ENCODE measurements at regions of chr12 and their contacts with region 1.

Region 1: DNA sequence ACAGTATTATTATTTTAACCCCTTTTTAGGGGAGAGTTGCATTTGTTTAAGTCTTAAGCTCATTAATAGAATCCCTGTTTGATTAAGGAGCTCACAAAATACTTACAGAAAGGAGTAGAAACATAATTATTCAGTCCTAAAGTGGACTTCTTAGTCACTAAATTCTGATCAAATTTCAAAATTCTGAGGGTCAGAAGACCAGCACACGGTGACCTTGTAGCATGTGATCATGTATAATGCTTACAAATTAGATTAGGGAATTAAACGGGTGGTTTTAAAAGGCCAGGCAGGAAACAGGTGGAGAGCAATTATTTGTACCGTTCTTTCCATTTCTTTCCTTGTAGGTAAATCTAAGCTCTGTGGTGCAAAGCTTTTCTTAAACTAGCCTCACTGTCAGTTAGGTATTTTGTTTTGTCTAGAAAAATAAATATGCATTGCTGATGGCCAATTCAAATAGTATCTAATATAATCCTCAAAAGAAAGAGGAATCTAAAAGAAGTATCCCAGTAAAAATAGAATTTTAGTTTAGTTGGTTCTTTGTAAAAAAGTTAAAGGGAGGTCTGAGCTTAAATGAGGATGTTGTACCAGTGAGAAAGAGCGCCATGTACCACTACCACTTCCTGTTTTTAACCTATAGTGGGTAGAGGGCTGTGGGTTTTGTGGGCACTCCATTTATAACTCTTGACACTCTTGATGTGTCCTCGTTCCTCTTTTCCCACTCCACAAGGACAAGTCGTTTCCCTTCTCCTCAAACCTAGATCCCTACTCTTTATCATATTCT is 51.1 kb downstream of the SLC38A1 start:
- DNase-seq: peak in 8 of 9 donors; percentile 58 to 87 (median 84)
- ATAC-seq: peak; percentile 54
- H3K4me3 ChIP-seq: peak overlapping the region; percentile 41
- H3K4me3 Mint-ChIP-seq: peak overlapping the region; percentile 74 to 89 (median 81)
- H3K27ac ChIP-seq: peak overlapping the region; percentile 78
- H3K27ac Mint-ChIP-seq: peak overlapping the region; percentile 89 to 100 (median 99)
- H3K4me1 ChIP-seq: peaks cover 95% of the 10 kb centered on the region in 2 donors
- H3K4me1 Mint-ChIP-seq: peaks cover 69 to 100% (median 98%) of the 10 kb centered on the region in 7 donors
- H3K27me3 ChIP-seq: no peaks in the 10 kb centered on the region
- H3K27me3 Mint-ChIP-seq: no peaks in the 10 kb centered on the region

Region 2: GRCh38 chr12:46179683-46180452 is 37.9 kb before region 1 on chr12:
- CTCF ChIA-PET with region 1: no interaction called
- POLR2A ChIA-PET with region 1: interaction called, 3 read pairs
- intact Hi-C with region 1: loop called in 1 of 2 experiments (anchors 2 kb)
- DNase-seq: no peak
- ATAC-seq: no peak
- H3K4me3 ChIP-seq: no peak overlapping the region
- H3K4me3 Mint-ChIP-seq: peak overlapping the region in 5 of 10 donors; percentile 5 to 38 (median 13)
- H3K27ac ChIP-seq: peak overlapping the region; percentile 55
- H3K27ac Mint-ChIP-seq: peak overlapping the region in 8 of 9 donors; percentile 54 to 92 (median 74)
- H3K4me1 ChIP-seq: peaks cover 8 to 26% of the 10 kb centered on the region in 2 donors
- H3K4me1 Mint-ChIP-seq: peaks cover 26 to 77% (median 70%) of the 10 kb centered on the region in 7 donors
- H3K27me3 ChIP-seq: no peaks in the 10 kb centered on the region
- H3K27me3 Mint-ChIP-seq: no peaks in the 10 kb centered on the region

Region 3: GRCh38 chr12:46230983-46231382 is 13.3 kb after region 1 on chr12:
- CTCF ChIA-PET with region 1: interaction called, 3 read pairs
- POLR2A ChIA-PET with region 1: interaction called, 20 read pairs
- intact Hi-C with region 1: loop called in 1 of 2 experiments (anchors 1 kb)
- DNase-seq: no peak
- ATAC-seq: peak; percentile 22
- H3K4me3 ChIP-seq: no peak overlapping the region
- H3K4me3 Mint-ChIP-seq: peak overlapping the region in 2 of 10 donors; percentile 24 to 51
- H3K27ac ChIP-seq: no peak overlapping the region
- H3K27ac Mint-ChIP-seq: peak overlapping the region in 7 of 9 donors; percentile 58 to 89 (median 78)
- H3K4me1 ChIP-seq: peaks cover 0 to 17% of the 10 kb centered on the region in 2 donors
- H3K4me1 Mint-ChIP-seq: peaks cover 26 to 94% (median 82%) of the 10 kb centered on the region in 7 donors
- H3K27me3 ChIP-seq: no peaks in the 10 kb centered on the region
- H3K27me3 Mint-ChIP-seq: no peaks in the 10 kb centered on the region

Region 4: GRCh38 chr12:46260151-46260918 is 42.6 kb after region 1 on chr12:
- CTCF ChIA-PET with region 1: interaction called, 3 read pairs
- POLR2A ChIA-PET with region 1: interaction called, 30 read pairs
- intact Hi-C with region 1: no loop called
- DNase-seq: no peak
- ATAC-seq: no peak
- H3K4me3 ChIP-seq: no peak overlapping the region
- H3K4me3 Mint-ChIP-seq: no peak overlapping the region
- H3K27ac ChIP-seq: no peak overlapping the region
- H3K27ac Mint-ChIP-seq: no peak overlapping the region
- H3K4me1 ChIP-seq: peaks cover 81 to 84% of the 10 kb centered on the region in 2 donors
- H3K4me1 Mint-ChIP-seq: peaks cover 0 to 40% (median 35%) of the 10 kb centered on the region in 7 donors
- H3K27me3 ChIP-seq: no peaks in the 10 kb centered on the region
- H3K27me3 Mint-ChIP-seq: no peaks in the 10 kb centered on the region

Region 5: DNA sequence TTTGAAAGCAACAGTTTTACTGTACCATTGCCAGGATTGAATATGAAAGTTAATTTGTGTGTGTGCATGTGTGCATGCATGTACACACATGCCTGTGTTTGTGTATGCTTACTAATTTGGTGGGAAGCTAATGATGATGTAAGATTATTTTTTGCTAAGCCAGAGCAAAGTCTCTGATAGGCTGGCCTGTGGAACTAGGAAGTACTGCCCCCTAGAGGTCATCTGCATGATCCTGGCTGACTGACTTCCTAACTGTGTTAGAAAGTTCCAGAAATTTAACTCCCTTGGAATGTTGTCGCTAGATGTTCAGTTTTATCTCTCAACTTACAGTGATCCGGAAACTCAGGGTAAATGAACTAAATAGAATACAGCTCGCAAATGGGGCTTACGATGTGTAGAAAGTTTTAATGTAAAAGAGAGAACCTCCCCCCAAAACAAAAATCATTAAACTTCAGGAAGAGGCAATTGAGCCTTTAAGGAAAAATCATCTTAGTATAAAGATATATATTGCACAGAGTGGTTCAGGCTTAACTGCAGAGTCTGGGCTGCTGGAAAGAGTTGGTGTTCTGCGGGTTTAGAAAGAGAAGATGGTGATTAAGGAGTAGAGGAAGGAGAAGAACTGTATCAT is 85.4 kb after region 1 on chr12:
- CTCF ChIA-PET with region 1: interaction called, 10 read pairs
- POLR2A ChIA-PET with region 1: interaction called, 4 read pairs
- intact Hi-C with region 1: no loop called
- DNase-seq: peak in 7 of 9 donors; percentile 40 to 66 (median 57)
- ATAC-seq: peak; percentile 91
- H3K4me3 ChIP-seq: no peak overlapping the region
- H3K4me3 Mint-ChIP-seq: no peak overlapping the region
- H3K27ac ChIP-seq: no peak overlapping the region
- H3K27ac Mint-ChIP-seq: peak overlapping the region in 2 of 9 donors; percentile 1 to 7
- H3K4me1 ChIP-seq: no peaks in the 10 kb centered on the region
- H3K4me1 Mint-ChIP-seq: peaks cover 5 to 20% (median 15%) of the 10 kb centered on the region in 7 donors
- H3K27me3 ChIP-seq: no peaks in the 10 kb centered on the region
- H3K27me3 Mint-ChIP-seq: peaks cover 0 to 22% (median 0%) of the 10 kb centered on the region in 5 donors

Region 6: DNA sequence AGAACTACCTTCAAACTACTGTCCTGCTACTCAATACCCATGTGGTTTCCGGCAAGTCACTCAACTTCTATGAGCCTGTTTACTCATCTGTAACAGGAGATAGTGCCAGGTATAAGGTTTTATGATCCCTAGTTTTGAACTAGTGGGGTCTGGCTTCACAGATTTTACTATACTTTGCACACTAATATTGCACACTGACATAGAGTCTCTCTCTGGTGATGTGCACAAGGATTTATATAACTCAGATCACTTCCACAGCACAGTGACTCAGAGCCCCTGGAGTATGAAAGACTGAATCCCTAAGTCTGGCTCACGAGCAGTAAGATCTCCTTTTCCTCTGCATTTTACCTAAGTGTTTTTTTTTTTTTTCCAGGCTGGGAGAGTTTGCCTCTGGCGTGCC is 224.5 kb after region 1 on chr12:
- CTCF ChIA-PET with region 1: no interaction called
- POLR2A ChIA-PET with region 1: no interaction called
- intact Hi-C with region 1: no loop called
- DNase-seq: no peak
- ATAC-seq: no peak
- H3K4me3 ChIP-seq: no peak overlapping the region
- H3K4me3 Mint-ChIP-seq: no peak overlapping the region
- H3K27ac ChIP-seq: no peak overlapping the region
- H3K27ac Mint-ChIP-seq: peak overlapping the region in 1 of 9 donors; percentile 83
- H3K4me1 ChIP-seq: no peaks in the 10 kb centered on the region
- H3K4me1 Mint-ChIP-seq: peaks cover 0 to 37% (median 17%) of the 10 kb centered on the region in 7 donors
- H3K27me3 ChIP-seq: no peaks in the 10 kb centered on the region
- H3K27me3 Mint-ChIP-seq: no peaks in the 10 kb centered on the region

Region 7: DNA sequence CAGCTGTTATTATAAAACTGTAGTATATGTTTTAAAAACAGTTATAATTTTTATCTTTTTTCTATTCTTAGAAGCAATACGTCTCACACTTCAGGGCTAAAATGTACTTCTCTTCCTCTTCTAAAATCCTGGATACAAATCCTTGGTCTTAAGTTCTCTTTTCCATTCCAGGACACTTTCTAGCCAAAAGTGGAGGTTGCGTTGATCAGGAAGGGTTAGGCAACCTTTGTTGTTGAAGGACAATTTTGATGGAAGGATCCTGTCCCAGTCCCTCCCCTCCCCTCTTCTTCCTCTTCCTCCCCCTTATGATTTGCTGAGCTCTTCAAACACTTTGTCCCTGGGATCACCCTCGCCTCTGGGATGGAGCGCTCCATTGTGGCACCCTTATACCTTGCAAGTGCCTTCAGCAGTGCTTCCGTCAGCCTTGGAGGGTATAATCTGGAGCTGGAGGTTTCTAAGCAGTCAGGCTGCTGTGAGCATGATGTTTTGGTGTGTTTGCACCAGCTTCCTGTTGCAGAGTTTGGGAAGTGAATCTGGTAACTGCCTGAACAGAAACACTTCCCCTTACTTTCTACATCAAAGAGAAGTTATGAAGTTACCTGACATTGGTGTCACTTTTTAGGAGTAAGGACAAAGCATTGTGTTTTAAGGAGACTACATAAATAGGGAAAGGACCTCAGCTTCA is 242.3 kb after region 1 on chr12:
- CTCF ChIA-PET with region 1: no interaction called
- POLR2A ChIA-PET with region 1: no interaction called
- intact Hi-C with region 1: loop called in 1 of 2 experiments (anchors 2 kb)
- DNase-seq: peak in 4 of 9 donors; percentile 10 to 38 (median 26)
- ATAC-seq: peak; percentile 63
- H3K4me3 ChIP-seq: peak overlapping the region; percentile 47
- H3K4me3 Mint-ChIP-seq: peak overlapping the region; percentile 74 to 95 (median 88)
- H3K27ac ChIP-seq: peak overlapping the region; percentile 42
- H3K27ac Mint-ChIP-seq: peak overlapping the region; percentile 86 to 99 (median 96)
- H3K4me1 ChIP-seq: peaks cover 26 to 56% of the 10 kb centered on the region in 2 donors
- H3K4me1 Mint-ChIP-seq: peaks cover 45 to 67% (median 61%) of the 10 kb centered on the region in 7 donors
- H3K27me3 ChIP-seq: no peaks in the 10 kb centered on the region
- H3K27me3 Mint-ChIP-seq: no peaks in the 10 kb centered on the region

Region 8: DNA sequence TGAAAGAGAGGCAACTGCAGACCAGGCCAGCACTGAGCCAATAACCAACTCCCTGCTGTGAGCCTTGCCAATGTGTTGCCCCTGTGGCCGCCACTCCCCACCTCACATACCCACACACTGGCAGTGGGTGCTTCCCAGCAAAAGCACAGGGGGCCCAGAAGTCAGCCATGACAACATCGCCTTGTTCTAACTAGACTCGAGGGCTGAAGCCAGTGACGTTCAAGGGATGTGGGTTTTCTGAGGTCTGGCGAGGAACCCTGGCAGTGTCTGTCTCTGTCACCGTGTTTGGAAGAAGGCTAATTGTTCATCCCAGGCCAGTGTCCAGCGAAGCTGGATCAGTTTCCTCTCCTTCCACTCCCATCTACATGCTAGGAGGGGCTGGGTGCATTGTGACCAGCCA is 1173.8 kb after region 1 on chr12:
- CTCF ChIA-PET with region 1: no interaction called
- POLR2A ChIA-PET with region 1: no interaction called
- intact Hi-C with region 1: loop called in 1 of 2 experiments (anchors 5 kb)
- DNase-seq: peak; percentile 22 to 78 (median 67)
- ATAC-seq: peak; percentile 91
- H3K4me3 ChIP-seq: no peak overlapping the region
- H3K4me3 Mint-ChIP-seq: peak overlapping the region; percentile 32 to 88 (median 69)
- H3K27ac ChIP-seq: peak overlapping the region; percentile 66
- H3K27ac Mint-ChIP-seq: peak overlapping the region; percentile 91 to 100 (median 97)
- H3K4me1 ChIP-seq: peaks cover 49 to 58% of the 10 kb centered on the region in 2 donors
- H3K4me1 Mint-ChIP-seq: peaks cover 44 to 79% (median 76%) of the 10 kb centered on the region in 7 donors
- H3K27me3 ChIP-seq: no peaks in the 10 kb centered on the region
- H3K27me3 Mint-ChIP-seq: no peaks in the 10 kb centered on the region

Measured in naive thymus-derived CD4-positive, alpha-beta T cell (primary cell).